Endothelial cell of umbilical vein (primary cell): ENCODE measurements at regions of chr1 and their contacts with region 1.

Region 1: DNA sequence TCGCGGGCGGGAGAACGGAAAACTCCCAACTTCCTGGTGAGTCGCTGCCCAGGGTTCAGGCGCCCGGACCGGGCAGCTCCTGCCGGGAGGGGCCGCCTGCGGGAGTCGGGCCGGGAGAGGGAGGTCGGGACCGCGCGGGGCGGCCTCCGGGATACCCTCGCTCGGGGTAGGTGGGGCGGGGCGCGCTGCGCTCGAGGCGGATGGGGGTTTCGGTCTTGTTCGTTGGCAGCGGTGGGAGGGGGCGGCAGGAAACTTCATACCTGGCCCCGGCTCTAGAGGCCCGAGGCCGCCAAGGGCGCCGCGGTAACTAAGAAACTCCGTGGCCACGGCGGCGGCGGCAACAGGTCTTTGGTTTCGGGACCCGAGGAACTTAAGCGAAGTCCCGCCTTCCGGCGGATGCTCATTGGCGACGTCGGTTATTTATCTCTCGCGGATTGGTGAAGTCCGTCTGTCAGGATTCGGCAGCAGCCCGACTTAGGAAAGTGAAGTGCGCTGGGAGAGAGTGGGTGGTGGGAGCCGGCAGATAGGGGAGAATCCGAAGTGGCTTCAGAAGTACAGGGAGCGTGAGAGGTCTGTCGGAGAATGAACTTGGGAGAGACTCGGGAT is 546 bp downstream of the NEK7 start:
- DNase-seq: peak; percentile 93
- H3K4me3 ChIP-seq: peak overlapping the region; percentile 82 to 95 (median 91)
- H3K27ac ChIP-seq: peak overlapping the region; percentile 45
- H3K4me1 ChIP-seq: peaks cover 59% of the 10 kb centered on the region
- H3K27me3 ChIP-seq: no peaks in the 10 kb centered on the region
- CTCF ChIP-seq: no peak
- POLR2A ChIP-seq: no peak

Region 2: GRCh38 chr1:197775282-197776262 is 381.8 kb before region 1 on chr1 and contains the start of gene DENND1B:
- CTCF ChIA-PET with region 1: no interaction called
- POLR2A ChIA-PET with region 1: no interaction called
- dilution Hi-C with region 1: no loop called
- intact Hi-C with region 1: loop called (anchors 10 kb)
- DNase-seq: peak; percentile 52
- H3K4me3 ChIP-seq: peak within 1 kb of the TSS; percentile 53 to 65 (median 63)
- H3K27ac ChIP-seq: peak within 1 kb of the TSS; percentile 30
- H3K4me1 ChIP-seq: peaks cover 21% of the 10 kb centered on the region
- H3K27me3 ChIP-seq: no peaks in the 10 kb centered on the region
- CTCF ChIP-seq: no peak
- POLR2A ChIP-seq: no peak
- total RNA-seq, gene DENND1B: 3.3 and 5.4 TPM in 2 replicates

Region 3: GRCh38 chr1:198088360-198089071 is 68.8 kb before region 1 on chr1:
- CTCF ChIA-PET with region 1: interaction called, 27 read pairs
- POLR2A ChIA-PET with region 1: interaction called, 3 read pairs
- dilution Hi-C with region 1: no loop called
- intact Hi-C with region 1: loop called (anchors 1 kb)
- DNase-seq: peak; percentile 69
- H3K4me3 ChIP-seq: no peak overlapping the region
- H3K27ac ChIP-seq: peak overlapping the region; percentile 21
- H3K4me1 ChIP-seq: peaks cover 4% of the 10 kb centered on the region
- H3K27me3 ChIP-seq: no peaks in the 10 kb centered on the region
- CTCF ChIP-seq: peak; percentile 31 to 48
- POLR2A ChIP-seq: no peak

Region 4: DNA sequence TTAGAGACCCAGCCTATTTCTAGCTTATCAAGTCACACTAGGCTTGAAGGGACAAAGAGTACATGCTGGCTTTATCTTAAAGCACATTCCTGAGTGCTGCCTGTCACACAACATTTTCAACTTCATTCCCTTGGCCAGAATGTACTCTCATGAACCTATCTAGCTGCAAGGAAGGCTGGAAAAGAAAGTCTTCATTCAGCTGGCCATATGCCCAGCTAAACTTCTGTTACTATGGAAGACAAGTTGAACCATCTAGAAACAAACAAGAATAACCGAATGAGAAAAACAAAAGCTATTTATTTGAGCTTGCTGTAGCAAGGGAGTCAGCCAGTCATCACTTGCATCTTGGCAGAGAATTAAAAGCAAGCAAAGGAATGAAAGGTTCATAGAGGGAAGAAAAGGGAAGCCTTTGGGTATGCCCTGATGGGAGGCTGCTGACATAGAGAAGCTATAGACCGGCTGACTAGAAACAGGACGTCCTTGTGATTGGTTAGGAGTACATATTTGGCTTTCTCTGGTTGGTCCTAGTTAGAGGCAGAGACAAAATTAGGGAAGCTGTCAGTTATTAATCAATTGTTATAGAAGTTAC is 107.8 kb after region 1 on chr1:
- CTCF ChIA-PET with region 1: interaction called, 4 read pairs
- POLR2A ChIA-PET with region 1: interaction called, 3 read pairs
- dilution Hi-C with region 1: no loop called
- intact Hi-C with region 1: loop called (anchors 1 kb)
- DNase-seq: peak; percentile 61
- H3K4me3 ChIP-seq: no peak overlapping the region
- H3K27ac ChIP-seq: no peak overlapping the region
- H3K4me1 ChIP-seq: peaks cover 42% of the 10 kb centered on the region
- H3K27me3 ChIP-seq: no peaks in the 10 kb centered on the region
- CTCF ChIP-seq: no peak
- POLR2A ChIP-seq: no peak

Region 5: GRCh38 chr1:198465201-198466144 is 308.1 kb after region 1 on chr1:
- CTCF ChIA-PET with region 1: interaction called, 3 read pairs
- POLR2A ChIA-PET with region 1: no interaction called
- dilution Hi-C with region 1: no loop called
- intact Hi-C with region 1: loop called (anchors 1 kb)
- DNase-seq: peak; percentile 83
- H3K4me3 ChIP-seq: no peak overlapping the region
- H3K27ac ChIP-seq: peak overlapping the region; percentile 53
- H3K4me1 ChIP-seq: peaks cover 9% of the 10 kb centered on the region
- H3K27me3 ChIP-seq: no peaks in the 10 kb centered on the region
- CTCF ChIP-seq: peak; percentile 22 to 48
- POLR2A ChIP-seq: no peak